H1 (cell line): ENCODE measurements at regions of chr11 and their contacts with region 1.

Region 1: DNA sequence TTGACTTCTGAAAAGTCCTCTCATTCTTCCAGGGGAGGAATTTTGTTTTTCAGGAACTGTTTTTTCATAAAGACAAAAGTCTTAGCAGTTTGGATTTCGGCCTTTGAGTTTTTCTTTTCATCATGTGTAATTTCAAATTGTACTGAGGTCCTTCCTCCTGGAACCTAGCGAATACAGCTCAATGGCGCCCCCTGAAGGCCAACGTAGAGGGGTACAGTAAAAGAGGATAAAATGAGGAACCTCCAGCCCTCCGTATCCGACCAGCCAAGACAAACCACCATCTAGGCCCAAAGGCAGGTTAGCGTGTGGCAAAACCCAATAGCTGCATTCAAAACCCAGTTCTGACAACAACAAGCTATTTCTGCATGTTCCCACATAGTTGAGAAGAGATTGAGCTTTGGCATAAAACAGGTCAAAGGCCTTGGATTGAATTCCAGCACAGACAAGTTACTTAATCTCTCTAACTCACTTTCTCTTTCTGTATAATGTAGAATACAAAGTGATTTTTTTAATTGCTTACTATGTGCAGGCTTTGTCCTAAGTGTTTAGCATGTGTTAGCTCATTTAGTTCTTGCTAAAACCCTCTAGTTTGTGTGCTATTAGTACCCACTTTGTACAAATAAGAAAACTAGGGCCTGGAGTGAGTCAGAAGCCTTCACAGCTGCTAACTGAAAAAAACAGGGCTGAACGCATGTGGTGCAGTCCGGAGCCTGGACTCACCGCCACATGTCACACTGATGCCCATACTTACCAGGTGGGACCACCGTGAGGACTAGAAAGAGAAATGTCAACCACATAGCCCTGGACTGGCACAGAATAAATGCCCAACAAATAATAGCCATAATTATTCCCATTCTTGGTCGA is 43.2 kb upstream of the ETS1 start:
- DNase-seq: peak; percentile 50 to 89
- H3K4me3 ChIP-seq: no peak overlapping the region
- H3K27ac ChIP-seq: no peak overlapping the region
- H3K4me1 ChIP-seq: peaks cover 0 to 2% (median 1%) of the 10 kb centered on the region in 4 experiments; a peak in 1 of 7 replicates
- H3K27me3 ChIP-seq: no peaks in the 10 kb centered on the region
- CTCF ChIP-seq: peak; percentile 62 to 88 (median 84)
- EP300 ChIP-seq: no peak
- POLR2A ChIP-seq: no peak
- RAD21 ChIP-seq: peak; percentile 94 to 97

Region 2: GRCh38 chr11:128157423-128158298 is 472.9 kb before region 1 on chr11:
- CTCF ChIA-PET with region 1: interaction called, 22 read pairs
- POLR2A ChIA-PET with region 1: no interaction called
- DNase-seq: peak in 1 of 2 experiments; percentile 76
- H3K4me3 ChIP-seq: peak overlapping the region in 2 of 4 experiments; percentile 19 to 45; a peak in 4 of 8 replicates
- H3K27ac ChIP-seq: no peak overlapping the region
- H3K4me1 ChIP-seq: no peaks in the 10 kb centered on the region
- H3K27me3 ChIP-seq: no peaks in the 10 kb centered on the region
- CTCF ChIP-seq: peak in 2 of 3 experiments; percentile 67 to 68; a peak in 3 of 4 replicates
- EP300 ChIP-seq: no peak
- POLR2A ChIP-seq: no peak
- RAD21 ChIP-seq: peak; percentile 70 to 71

Region 3: DNA sequence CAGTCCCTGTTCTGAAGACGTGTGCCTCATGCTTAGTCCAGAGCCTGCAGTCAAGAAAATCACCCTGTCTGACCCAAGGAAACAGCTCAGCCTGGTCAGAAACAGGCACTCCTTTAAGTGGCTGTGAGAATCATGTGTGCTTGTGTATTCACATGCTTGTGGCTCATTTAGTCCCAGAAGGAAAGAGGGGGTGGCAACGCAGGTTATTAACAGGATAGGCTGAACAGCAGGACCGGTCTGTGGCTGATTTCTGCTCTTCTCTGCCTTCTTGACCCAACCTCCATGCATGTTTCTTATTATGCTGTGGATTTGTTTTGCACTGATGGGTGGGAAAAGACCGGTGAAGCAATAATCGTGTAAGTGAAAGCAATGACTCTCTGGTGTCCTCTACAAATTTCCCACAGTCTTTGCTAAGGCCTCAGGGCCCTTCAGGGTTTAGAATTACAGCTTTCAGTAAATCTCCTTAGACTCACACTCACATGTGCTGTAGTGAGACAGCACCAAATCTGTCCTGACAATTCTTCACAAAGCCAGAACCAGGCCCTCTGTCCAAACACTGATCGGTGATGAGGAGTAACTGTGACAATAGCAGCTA is 331.4 kb before region 1 on chr11:
- CTCF ChIA-PET with region 1: interaction called, 11 read pairs
- POLR2A ChIA-PET with region 1: no interaction called
- DNase-seq: no peak
- H3K4me3 ChIP-seq: no peak overlapping the region
- H3K27ac ChIP-seq: no peak overlapping the region
- H3K4me1 ChIP-seq: no peaks in the 10 kb centered on the region
- H3K27me3 ChIP-seq: peaks cover 0 to 1% (median 0%) of the 10 kb centered on the region in 4 experiments; a peak in 1 of 7 replicates
- CTCF ChIP-seq: no peak
- EP300 ChIP-seq: no peak
- POLR2A ChIP-seq: no peak
- RAD21 ChIP-seq: no peak

Region 4: GRCh38 chr11:128422576-128423370 is 207.8 kb before region 1 on chr11:
- CTCF ChIA-PET with region 1: interaction called, 20 read pairs
- POLR2A ChIA-PET with region 1: no interaction called
- DNase-seq: no peak
- H3K4me3 ChIP-seq: no peak overlapping the region
- H3K27ac ChIP-seq: no peak overlapping the region
- H3K4me1 ChIP-seq: 0 out of 7 replicates have a peak, but pooled peaks cover 0 to 2% (median 0%) of the 10 kb centered on the region in 4 experiments
- H3K27me3 ChIP-seq: no peaks in the 10 kb centered on the region
- CTCF ChIP-seq: no peak
- EP300 ChIP-seq: no peak
- POLR2A ChIP-seq: no peak
- RAD21 ChIP-seq: no peak

Region 5: DNA sequence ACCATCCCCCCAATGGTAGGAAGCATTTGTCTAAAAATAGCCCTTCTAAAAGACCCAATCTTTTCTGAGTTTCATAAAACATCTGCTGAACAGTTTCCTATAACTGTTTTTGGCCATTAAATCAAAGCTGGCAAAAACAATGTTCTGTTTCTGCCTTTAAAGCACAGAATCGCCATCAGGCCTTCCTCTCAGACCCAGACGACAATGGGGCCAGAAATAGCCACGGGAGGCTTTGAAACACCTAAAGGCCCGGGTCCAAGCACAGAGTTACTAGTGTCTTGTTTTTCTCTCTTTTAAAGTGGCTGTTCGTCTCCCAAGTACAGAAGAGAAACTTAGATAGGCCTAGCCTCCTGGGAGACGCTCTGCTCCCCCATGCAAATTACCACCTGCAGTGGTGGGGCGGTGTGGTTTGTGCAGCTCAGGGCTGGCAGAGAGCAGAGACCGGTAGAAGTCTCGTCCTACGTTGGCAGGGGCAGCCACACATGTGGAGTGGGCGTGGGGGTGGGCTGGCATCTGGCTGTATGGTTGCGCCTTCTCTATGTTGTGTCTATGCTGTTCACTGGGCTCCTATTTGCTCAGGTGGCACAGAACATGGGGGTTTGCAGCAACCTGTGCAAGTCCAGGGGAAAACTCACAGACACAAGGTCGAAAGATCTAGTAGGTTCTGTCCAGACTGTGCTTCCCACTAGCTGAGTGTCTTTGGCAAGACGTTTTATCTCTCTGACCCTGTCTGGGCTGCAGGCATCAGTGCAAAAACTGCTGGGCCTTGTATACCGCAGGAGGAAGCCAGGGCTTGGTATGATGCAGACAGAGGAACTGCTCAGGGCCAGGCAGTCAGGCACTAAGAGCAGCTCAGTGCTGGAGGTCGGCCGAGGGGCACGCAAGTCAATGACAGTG is 19.6 kb before region 1 on chr11:
- CTCF ChIA-PET with region 1: interaction called, 319 read pairs
- POLR2A ChIA-PET with region 1: no interaction called
- DNase-seq: no peak
- H3K4me3 ChIP-seq: no peak overlapping the region
- H3K27ac ChIP-seq: no peak overlapping the region
- H3K4me1 ChIP-seq: peaks cover 0 to 3% (median 1%) of the 10 kb centered on the region in 4 experiments; a peak in 6 of 7 replicates
- H3K27me3 ChIP-seq: no peaks in the 10 kb centered on the region; a peak in 1 of 7 replicates
- CTCF ChIP-seq: no peak
- EP300 ChIP-seq: no peak
- POLR2A ChIP-seq: no peak
- RAD21 ChIP-seq: no peak

Region 6: GRCh38 chr11:128725630-128726319 is 95.2 kb after region 1 on chr11:
- CTCF ChIA-PET with region 1: interaction called, 11 read pairs
- POLR2A ChIA-PET with region 1: no interaction called
- DNase-seq: no peak
- H3K4me3 ChIP-seq: no peak overlapping the region
- H3K27ac ChIP-seq: no peak overlapping the region
- H3K4me1 ChIP-seq: peaks cover 0 to 3% (median under 1%) of the 10 kb centered on the region in 4 experiments; a peak in 2 of 7 replicates
- H3K27me3 ChIP-seq: 0 out of 7 replicates have a peak, but pooled peaks cover 0 to 2% (median 0%) of the 10 kb centered on the region in 4 experiments
- CTCF ChIP-seq: no peak
- EP300 ChIP-seq: no peak
- POLR2A ChIP-seq: no peak
- RAD21 ChIP-seq: no peak

Region 7: GRCh38 chr11:128831174-128832120 is 200.8 kb after region 1 on chr11:
- CTCF ChIA-PET with region 1: interaction called, 36 read pairs
- POLR2A ChIA-PET with region 1: no interaction called
- DNase-seq: peak; percentile 66 to 91
- H3K4me3 ChIP-seq: no peak overlapping the region
- H3K27ac ChIP-seq: no peak overlapping the region
- H3K4me1 ChIP-seq: no peaks in the 10 kb centered on the region
- H3K27me3 ChIP-seq: peaks cover 0 to 3% (median 0%) of the 10 kb centered on the region in 4 experiments; a peak in 3 of 7 replicates
- CTCF ChIP-seq: peak; percentile 86 to 92 (median 88)
- EP300 ChIP-seq: no peak
- POLR2A ChIP-seq: no peak
- RAD21 ChIP-seq: peak; percentile 94 to 97

Region 8: GRCh38 chr11:128917144-128917724 is 286.6 kb after region 1 on chr11:
- CTCF ChIA-PET with region 1: no interaction called
- POLR2A ChIA-PET with region 1: no interaction called
- DNase-seq: no peak
- H3K4me3 ChIP-seq: no peak overlapping the region
- H3K27ac ChIP-seq: no peak overlapping the region
- H3K4me1 ChIP-seq: no peaks in the 10 kb centered on the region; a peak in 1 of 7 replicates
- H3K27me3 ChIP-seq: peaks cover 0 to 3% (median under 1%) of the 10 kb centered on the region in 4 experiments; a peak in 2 of 7 replicates
- CTCF ChIP-seq: no peak
- EP300 ChIP-seq: no peak
- POLR2A ChIP-seq: no peak
- RAD21 ChIP-seq: no peak